Esophagus muscularis mucosa (tissue), 4 donors: ENCODE measurements at regions of chr4 and their contacts with region 1.

Region 1: GRCh38 chr4:119041951-119042560 is 93.6 kb upstream of the MYOZ2 start:
- DNase-seq: no peak
- H3K4me3 ChIP-seq: no peak overlapping the region
- H3K27ac ChIP-seq: peak overlapping the region; percentile 91 to 98 (median 94)
- H3K4me1 ChIP-seq: peaks cover 49 to 100% (median 92%) of the 10 kb centered on the region in 4 donors
- H3K27me3 ChIP-seq: no peaks in the 10 kb centered on the region
- CTCF ChIP-seq: peak; percentile 61 to 84 (median 73)
- EP300 ChIP-seq: no peak
- POLR2A ChIP-seq: no peak

Region 2: DNA sequence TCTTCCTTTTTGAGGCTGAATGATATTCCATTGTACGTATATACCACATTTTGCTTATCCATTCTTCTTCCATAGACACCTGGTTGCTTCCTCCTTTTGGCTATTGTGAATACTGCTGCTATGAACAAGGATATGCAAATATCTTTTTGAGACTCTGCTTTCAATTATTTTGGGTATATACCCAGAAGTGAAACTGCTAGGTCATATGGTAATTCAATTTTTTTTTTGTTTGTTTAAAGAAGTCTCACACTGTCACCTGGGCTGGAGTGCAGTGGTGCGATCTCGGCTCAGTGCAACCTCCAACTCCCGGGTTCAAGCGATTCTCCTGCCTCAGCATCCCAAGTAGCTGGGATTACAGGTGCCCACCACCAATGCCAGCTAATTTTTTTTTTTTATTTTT is 281.6 kb before region 1 on chr4:
- intact Hi-C with region 1: loop called (anchors 5 kb)
- DNase-seq: no peak
- H3K4me3 ChIP-seq: no peak overlapping the region
- H3K27ac ChIP-seq: peak overlapping the region; percentile 76 to 91 (median 82)
- H3K4me1 ChIP-seq: peaks cover 57 to 100% (median 96%) of the 10 kb centered on the region in 4 donors
- H3K27me3 ChIP-seq: no peaks in the 10 kb centered on the region
- CTCF ChIP-seq: no peak
- EP300 ChIP-seq: no peak
- POLR2A ChIP-seq: no peak

Region 3: GRCh38 chr4:118981839-118982381 is 60.1 kb before region 1 on chr4:
- intact Hi-C with region 1: loop called (anchors 2 kb)
- DNase-seq: no peak
- H3K4me3 ChIP-seq: peak overlapping the region; percentile 14 to 34 (median 22)
- H3K27ac ChIP-seq: peak overlapping the region; percentile 85 to 91 (median 90)
- H3K4me1 ChIP-seq: peaks cover 45 to 99% (median 92%) of the 10 kb centered on the region in 4 donors
- H3K27me3 ChIP-seq: no peaks in the 10 kb centered on the region
- CTCF ChIP-seq: peak; percentile 77 to 89 (median 78)
- EP300 ChIP-seq: no peak
- POLR2A ChIP-seq: no peak

Region 4: GRCh38 chr4:119212234-119212963 is 170.3 kb after region 1 on chr4 and contains the start of gene USP53:
- intact Hi-C with region 1: loop called (anchors 5 kb)
- DNase-seq: peak; percentile 99
- H3K4me3 ChIP-seq: peak within 1 kb of the TSS; percentile 76 to 95 (median 84)
- H3K27ac ChIP-seq: peak within 1 kb of the TSS; percentile 93 to 99 (median 97)
- H3K4me1 ChIP-seq: peaks cover 10 to 33% (median 33%) of the 10 kb centered on the region in 4 donors
- H3K27me3 ChIP-seq: no peaks in the 10 kb centered on the region
- CTCF ChIP-seq: no peak
- EP300 ChIP-seq: no peak
- POLR2A ChIP-seq: peak; percentile 97
- total RNA-seq, gene USP53: 68.1 to 116 (median 78.4) TPM

Region 5: DNA sequence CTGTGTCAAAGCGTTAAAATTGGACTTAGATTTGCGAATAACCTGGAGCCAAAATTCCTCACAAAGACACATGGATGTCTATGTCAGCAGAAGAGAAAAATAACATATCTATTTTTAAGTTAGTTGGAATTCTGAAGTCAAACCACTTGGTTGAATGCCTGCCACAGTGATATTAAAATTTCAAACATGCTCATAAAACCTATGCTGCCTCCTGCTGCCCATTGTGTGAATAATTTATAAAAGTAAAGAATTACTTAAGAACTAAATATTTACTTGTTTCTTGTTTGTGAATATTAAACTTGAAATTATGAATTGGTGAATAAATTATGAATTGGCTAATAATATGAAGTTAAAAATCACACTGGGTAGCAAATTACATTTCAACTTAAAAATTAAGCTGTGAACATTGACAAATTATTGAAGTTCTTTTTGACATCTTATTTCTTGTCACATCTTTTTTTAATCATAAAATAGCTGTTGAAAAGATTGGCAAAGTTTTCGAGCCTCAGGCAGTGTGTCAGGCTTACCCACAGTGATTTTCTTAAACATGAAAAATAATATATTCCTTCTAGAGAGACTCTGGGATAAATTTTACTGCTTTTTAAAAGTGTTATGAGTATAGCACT is 244.4 kb after region 1 on chr4:
- intact Hi-C with region 1: loop called (anchors 5 kb)
- DNase-seq: no peak
- H3K4me3 ChIP-seq: no peak overlapping the region
- H3K27ac ChIP-seq: peak overlapping the region in 1 of 4 donors; percentile 1
- H3K4me1 ChIP-seq: peaks cover 31 to 51% (median 36%) of the 10 kb centered on the region in 4 donors
- H3K27me3 ChIP-seq: no peaks in the 10 kb centered on the region
- CTCF ChIP-seq: peak; percentile 61 to 73 (median 63)
- EP300 ChIP-seq: no peak
- POLR2A ChIP-seq: no peak